Mammary epithelial cell (primary cell): ENCODE measurements at regions of chr19 and their contacts with region 1.

Region 1: DNA sequence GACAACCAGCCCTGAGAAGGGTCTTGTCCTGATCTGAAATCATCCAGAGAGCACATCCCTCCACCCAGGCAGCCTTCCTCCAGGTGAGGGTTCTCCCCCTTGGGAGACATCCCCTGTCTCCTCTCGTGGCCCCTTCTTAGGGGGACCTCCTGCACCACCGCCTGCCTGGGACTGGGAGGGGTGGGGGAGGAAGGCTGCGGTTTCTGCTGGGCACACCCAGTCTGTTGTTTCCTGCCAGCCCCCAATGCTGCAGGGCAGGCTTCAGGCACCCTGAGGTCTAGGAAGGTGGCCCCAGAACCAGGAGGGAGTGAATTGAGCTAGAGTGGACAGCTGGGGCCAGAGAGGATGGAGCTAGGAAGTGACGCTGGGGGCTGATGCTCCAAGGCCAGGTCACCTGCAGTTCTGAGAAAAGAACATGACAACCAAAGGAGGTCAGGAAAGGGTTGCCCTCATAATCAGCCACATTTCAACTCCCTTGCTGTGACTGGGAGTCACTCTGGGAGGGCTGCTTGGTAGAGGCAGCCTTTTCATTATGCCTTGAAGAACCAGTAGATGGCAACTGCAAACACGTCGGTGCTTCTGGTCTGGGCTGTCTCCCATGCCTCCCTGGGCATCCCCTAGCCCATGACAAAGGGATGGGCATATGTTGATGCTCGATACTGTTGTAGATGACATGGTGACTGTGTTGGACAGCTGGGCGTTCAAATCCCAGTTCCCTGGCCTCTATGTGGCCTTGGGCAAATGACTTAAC is 1.4 kb downstream of the ARHGEF18 start:
- DNase-seq: no peak
- H3K4me3 ChIP-seq: no peak overlapping the region
- H3K27ac ChIP-seq: no peak overlapping the region
- H3K4me1 ChIP-seq: no peaks in the 10 kb centered on the region
- H3K27me3 ChIP-seq: no peaks in the 10 kb centered on the region
- CTCF ChIP-seq: no peak

Region 2: DNA sequence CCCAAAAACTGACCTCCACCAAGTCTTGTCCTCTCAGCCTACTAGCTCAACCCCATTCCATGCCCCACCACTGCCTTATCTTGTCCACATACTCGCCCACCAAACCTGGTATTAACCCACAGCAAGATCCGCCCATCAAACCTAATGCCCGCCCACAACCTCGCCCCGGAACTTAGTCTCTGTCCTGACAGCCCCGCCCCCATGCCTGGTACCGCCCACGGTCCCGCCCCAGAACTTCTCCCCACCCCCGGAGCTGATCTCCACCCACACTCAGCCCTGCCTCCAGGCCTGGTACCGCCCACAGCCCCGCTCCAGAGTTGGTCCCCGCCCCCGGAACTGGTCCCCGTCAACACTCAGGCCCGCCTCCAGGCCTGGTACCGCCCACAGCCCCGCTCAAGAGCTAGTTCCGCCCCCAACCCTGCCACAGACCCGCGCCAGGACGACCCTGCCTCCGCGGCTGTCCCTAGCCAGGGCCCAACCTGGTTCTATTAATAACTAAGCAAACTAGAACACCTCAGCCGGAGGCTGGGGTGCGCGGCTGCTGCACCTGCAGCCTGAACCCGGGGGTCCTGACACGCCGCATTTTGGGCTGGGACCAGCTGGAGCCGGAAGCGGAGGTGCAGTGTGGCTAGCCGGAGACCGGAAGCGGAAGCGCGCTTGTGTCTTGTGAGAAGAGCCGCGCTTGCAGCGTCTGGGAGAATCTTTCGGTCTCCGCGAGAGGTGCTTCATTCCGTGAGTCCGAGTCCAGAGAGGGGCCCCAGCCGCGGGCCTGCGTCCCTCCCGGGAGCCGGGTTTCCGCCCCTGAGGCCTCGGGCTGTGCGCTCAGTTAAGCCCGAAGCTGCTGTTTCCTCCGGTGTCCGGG is 280.9 kb before region 1 on chr19 and contains the start of gene ZNF557:
- CTCF ChIA-PET with region 1: no interaction called
- dilution Hi-C with region 1: no loop called
- in situ Hi-C with region 1: no loop called
- intact Hi-C with region 1: no loop called
- DNase-seq: peak; percentile 96
- H3K4me3 ChIP-seq: peak within 1 kb of the TSS; percentile 63 to 94 (median 89)
- H3K27ac ChIP-seq: peak within 1 kb of the TSS; percentile 51
- H3K4me1 ChIP-seq: peaks cover 6% of the 10 kb centered on the region
- H3K27me3 ChIP-seq: no peaks in the 10 kb centered on the region
- CTCF ChIP-seq: no peak
- total RNA-seq, gene ZNF557: 8.4 to 13.2 TPM

Region 3: GRCh38 chr19:7197760-7198696 is 152.1 kb before region 1 on chr19:
- CTCF ChIA-PET with region 1: no interaction called
- dilution Hi-C with region 1: no loop called
- in situ Hi-C with region 1: no loop called
- intact Hi-C with region 1: no loop called
- DNase-seq: peak; percentile 92
- H3K4me3 ChIP-seq: peak overlapping the region; percentile 56 to 74 (median 60)
- H3K27ac ChIP-seq: no peak overlapping the region
- H3K4me1 ChIP-seq: peaks cover 10% of the 10 kb centered on the region
- H3K27me3 ChIP-seq: no peaks in the 10 kb centered on the region
- CTCF ChIP-seq: no peak

Region 4: GRCh38 chr19:7376151-7376852 is 26.2 kb after region 1 on chr19:
- CTCF ChIA-PET with region 1: interaction called, 6 read pairs
- dilution Hi-C with region 1: no loop called
- in situ Hi-C with region 1: no loop called
- intact Hi-C with region 1: loop called (anchors 1 kb)
- DNase-seq: peak; percentile 59
- H3K4me3 ChIP-seq: no peak overlapping the region
- H3K27ac ChIP-seq: no peak overlapping the region
- H3K4me1 ChIP-seq: peaks cover 11% of the 10 kb centered on the region
- H3K27me3 ChIP-seq: no peaks in the 10 kb centered on the region
- CTCF ChIP-seq: no peak

Region 5: GRCh38 chr19:7562646-7563393 is 212.7 kb after region 1 on chr19:
- CTCF ChIA-PET with region 1: no interaction called
- dilution Hi-C with region 1: no loop called
- in situ Hi-C with region 1: no loop called
- intact Hi-C with region 1: loop called (anchors 10 kb)
- DNase-seq: no peak
- H3K4me3 ChIP-seq: no peak overlapping the region
- H3K27ac ChIP-seq: no peak overlapping the region
- H3K4me1 ChIP-seq: no peaks in the 10 kb centered on the region
- H3K27me3 ChIP-seq: no peaks in the 10 kb centered on the region
- CTCF ChIP-seq: no peak